ENCODE measurements at regions of chr18 and their contacts with region 1.

Region 1: DNA sequence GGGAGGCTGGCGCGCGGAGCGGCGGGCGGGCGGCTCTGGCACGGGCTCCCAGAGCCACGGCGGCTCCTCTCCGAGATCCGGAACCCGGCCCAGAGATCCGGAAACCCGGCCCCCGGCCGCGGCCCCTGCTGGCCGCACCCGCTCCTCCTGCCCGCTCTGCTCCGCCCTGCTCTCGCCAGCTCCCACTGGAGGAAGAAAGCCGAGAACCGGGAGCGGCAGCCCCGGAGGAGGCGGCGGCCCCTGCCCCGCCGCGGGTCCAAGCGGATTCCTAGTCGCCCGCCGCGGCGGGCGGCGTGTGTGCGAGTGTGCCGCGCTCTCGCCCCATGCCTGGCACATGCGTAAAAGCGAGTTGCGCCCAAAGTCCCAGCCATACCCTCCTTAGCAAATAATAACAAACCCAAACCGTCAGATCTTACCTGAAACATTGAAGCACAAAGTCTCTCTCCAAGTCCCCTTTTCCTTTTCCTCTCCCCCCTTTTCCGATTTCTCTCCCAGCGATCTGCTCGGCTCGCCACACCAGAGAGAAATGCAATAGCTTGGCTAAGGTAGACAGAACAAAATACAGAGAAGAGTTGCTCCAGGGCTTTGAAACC is 108.7 kb upstream of the KCTD1 start:
- DNase-seq: peak; percentile 84
- H3K4me3 ChIP-seq: peak overlapping the region; percentile 67 to 92 (median 76)
- H3K27ac ChIP-seq: peak overlapping the region; percentile 83 to 91 (median 86)
- H3K4me1 ChIP-seq: peaks cover 0 to 27% (median 23%) of the 10 kb centered on the region in 4 donors
- H3K27me3 ChIP-seq: no peaks in the 10 kb centered on the region
- CTCF ChIP-seq: no peak
- EP300 ChIP-seq: no peak
- POLR2A ChIP-seq: no peak

Region 2: GRCh38 chr18:26548429-26549262 is 108.4 kb before region 1 on chr18 and contains the start of gene KCTD1:
- intact Hi-C with region 1: loop called (anchors 5 kb)
- DNase-seq: peak; percentile 86
- H3K4me3 ChIP-seq: peak within 1 kb of the TSS; percentile 61 to 75 (median 70)
- H3K27ac ChIP-seq: peak within 1 kb of the TSS; percentile 55 to 74 (median 72)
- H3K4me1 ChIP-seq: peaks cover 0 to 56% (median 53%) of the 10 kb centered on the region in 4 donors
- H3K27me3 ChIP-seq: peaks cover 10 to 43% (median 34%) of the 10 kb centered on the region in 3 donors
- CTCF ChIP-seq: no peak
- EP300 ChIP-seq: no peak
- POLR2A ChIP-seq: no peak
- total RNA-seq, gene KCTD1: 7.1 to 22.4 (median 16.1) TPM

Measured in sigmoid colon (tissue), 7 donors.